Right cardiac atrium (tissue), 5 donors: ENCODE measurements at regions of chr5 and their contacts with region 1.

Region 1: GRCh38 chr5:178279725-178280438 is 47.3 kb upstream of the PHYKPL start:
- DNase-seq: peak; percentile 93 to 97 (median 97)
- ATAC-seq: peak; percentile 92 to 94
- H3K4me3 ChIP-seq: no peak overlapping the region
- H3K27ac ChIP-seq: no peak overlapping the region
- H3K4me1 ChIP-seq: no peaks in the 10 kb centered on the region
- H3K27me3 ChIP-seq: no peaks in the 10 kb centered on the region

Region 2: DNA sequence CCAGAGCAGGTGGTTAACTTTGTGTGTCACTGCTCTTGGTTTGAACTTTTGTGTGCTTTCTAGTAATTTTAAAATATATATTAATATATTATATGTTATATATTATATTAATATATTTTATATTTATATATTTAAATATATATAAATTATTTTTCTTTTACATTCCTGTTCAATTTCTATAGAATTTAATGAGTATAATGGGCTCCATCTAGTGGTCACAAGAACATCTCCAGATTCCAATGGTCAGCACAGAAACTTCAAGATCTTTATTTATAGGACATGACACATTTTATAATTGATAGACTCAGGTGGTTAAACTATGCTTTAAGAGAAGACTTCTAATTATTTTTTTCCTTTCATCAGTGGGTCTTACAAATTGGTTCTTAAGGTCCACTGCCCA is 271.2 kb after region 1 on chr5:
- intact Hi-C with region 1: loop called in 2 of 4 experiments (anchors 2 to 5 kb)
- DNase-seq: no peak
- ATAC-seq: no peak
- H3K4me3 ChIP-seq: no peak overlapping the region
- H3K27ac ChIP-seq: no peak overlapping the region
- H3K4me1 ChIP-seq: no peaks in the 10 kb centered on the region
- H3K27me3 ChIP-seq: no peaks in the 10 kb centered on the region

Region 3: DNA sequence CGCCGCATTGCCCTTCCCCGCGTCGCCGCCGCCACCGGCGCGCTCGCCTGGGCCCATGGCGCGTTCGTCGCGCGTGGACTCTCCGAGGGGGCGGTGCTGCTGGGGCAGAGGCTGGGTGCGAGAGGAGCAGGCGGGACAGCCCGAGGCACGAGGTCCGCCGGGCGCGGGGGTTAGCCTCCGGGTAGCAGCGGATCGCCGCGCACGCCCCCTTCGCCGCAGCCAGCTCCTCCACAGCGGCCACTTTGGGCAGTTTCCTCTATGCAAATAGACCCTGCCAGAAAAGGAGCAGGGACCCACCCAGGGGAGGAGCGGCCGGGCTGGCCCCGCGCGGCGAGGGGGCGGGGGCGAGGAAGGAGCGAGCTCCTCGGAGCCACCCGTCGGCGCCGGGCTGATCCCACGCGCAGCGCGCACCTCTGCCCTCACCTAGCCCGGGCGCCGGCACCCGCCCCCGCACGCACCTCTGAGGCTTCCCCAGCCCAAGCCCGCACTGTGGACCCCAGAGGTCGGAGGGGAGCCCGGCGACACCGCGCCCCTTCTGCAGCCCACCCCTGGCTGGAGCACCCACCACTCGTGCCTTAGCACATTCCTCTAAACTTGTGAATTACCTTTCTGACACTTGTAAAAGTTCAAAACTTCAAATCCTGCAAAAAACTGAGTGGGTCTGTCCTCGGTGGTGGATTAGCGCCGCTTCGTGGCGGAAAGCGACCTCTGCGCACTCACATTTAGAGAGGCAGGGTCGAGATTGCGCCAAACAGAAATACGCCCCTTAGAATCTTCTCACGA is 310.4 kb after region 1 on chr5 and contains the start of gene COL23A1:
- intact Hi-C with region 1: loop called in 3 of 4 experiments (anchors 2 to 10 kb)
- DNase-seq: peak; percentile 78 to 90 (median 88)
- ATAC-seq: peak; percentile 90
- H3K4me3 ChIP-seq: peak within 1 kb of the TSS; percentile 27
- H3K27ac ChIP-seq: no peak within 1 kb of the TSS
- H3K4me1 ChIP-seq: peaks cover 3% of the 10 kb centered on the region
- H3K27me3 ChIP-seq: no peaks in the 10 kb centered on the region
- total RNA-seq, gene COL23A1: 5.5 to 13.6 (median 8.8) TPM